Transverse colon (tissue), 4 donors: ENCODE measurements at regions of chr4 and their contacts with region 1.

Region 1: DNA sequence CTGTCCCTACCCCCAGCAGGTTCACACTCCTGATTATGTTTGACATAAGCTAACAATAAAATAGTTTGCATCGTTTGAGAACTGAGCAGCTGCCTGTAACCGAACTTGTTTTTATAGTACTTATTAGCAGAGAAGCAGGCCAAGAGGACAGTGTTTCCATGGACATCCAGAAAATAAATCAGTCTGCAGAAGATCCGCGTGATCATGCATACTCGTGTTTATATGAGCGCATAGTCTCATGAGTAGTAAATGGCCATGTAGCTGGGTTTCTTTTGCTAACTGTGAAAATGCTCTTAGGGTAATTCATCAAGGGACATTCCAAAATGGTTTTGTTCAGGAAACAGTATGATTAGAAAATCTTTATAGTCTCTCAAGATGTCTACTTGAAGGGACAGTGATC is 289.2 kb downstream of the DCTD start:
- DNase-seq: no peak
- H3K4me3 ChIP-seq: no peak overlapping the region
- H3K27ac ChIP-seq: peak overlapping the region in 1 of 4 donors; percentile 15
- H3K4me1 ChIP-seq: no peaks in the 10 kb centered on the region
- H3K27me3 ChIP-seq: no peaks in the 10 kb centered on the region
- CTCF ChIP-seq: no peak
- EP300 ChIP-seq: no peak
- POLR2A ChIP-seq: no peak

Region 2: DNA sequence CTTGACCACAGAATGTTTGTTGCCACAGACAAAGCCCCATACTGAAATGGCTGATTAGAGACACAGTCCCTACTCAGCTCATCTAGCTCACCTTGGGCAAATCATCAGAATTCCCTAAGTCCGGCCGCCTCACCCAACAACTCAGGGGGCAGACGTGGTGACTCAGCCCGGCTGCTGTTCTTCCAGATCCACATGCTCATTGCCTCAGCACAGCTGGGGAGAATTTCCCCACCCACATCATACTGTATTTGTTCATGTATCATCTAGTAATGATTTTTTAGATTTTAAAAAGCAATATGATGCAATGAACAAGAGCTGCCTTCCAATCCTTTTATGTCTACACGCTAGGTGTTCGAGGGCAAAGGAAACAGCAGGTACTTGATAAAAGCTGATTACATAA is 718.6 kb before region 1 on chr4:
- in situ Hi-C with region 1: no loop called
- intact Hi-C with region 1: loop called (anchors 5 kb)
- DNase-seq: no peak
- H3K4me3 ChIP-seq: no peak overlapping the region
- H3K27ac ChIP-seq: no peak overlapping the region
- H3K4me1 ChIP-seq: no peaks in the 10 kb centered on the region
- H3K27me3 ChIP-seq: no peaks in the 10 kb centered on the region
- CTCF ChIP-seq: no peak
- EP300 ChIP-seq: no peak
- POLR2A ChIP-seq: no peak